Colonic mucosa (tissue), 4 donors: ENCODE measurements at regions of chr18 and their contacts with region 1.

Region 1: DNA sequence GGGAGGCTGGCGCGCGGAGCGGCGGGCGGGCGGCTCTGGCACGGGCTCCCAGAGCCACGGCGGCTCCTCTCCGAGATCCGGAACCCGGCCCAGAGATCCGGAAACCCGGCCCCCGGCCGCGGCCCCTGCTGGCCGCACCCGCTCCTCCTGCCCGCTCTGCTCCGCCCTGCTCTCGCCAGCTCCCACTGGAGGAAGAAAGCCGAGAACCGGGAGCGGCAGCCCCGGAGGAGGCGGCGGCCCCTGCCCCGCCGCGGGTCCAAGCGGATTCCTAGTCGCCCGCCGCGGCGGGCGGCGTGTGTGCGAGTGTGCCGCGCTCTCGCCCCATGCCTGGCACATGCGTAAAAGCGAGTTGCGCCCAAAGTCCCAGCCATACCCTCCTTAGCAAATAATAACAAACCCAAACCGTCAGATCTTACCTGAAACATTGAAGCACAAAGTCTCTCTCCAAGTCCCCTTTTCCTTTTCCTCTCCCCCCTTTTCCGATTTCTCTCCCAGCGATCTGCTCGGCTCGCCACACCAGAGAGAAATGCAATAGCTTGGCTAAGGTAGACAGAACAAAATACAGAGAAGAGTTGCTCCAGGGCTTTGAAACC is 108.7 kb upstream of the KCTD1 start:
- DNase-seq: peak; percentile 76
- H3K4me3 ChIP-seq: peak overlapping the region; percentile 62
- H3K27ac ChIP-seq: peak overlapping the region; percentile 55
- H3K4me1 ChIP-seq: no peaks in the 10 kb centered on the region
- H3K27me3 ChIP-seq: no peaks in the 10 kb centered on the region
- CTCF ChIP-seq: no peak

Region 2: GRCh38 chr18:26307189-26307773 is 349.8 kb before region 1 on chr18:
- intact Hi-C with region 1: loop called (anchors 5 kb)
- DNase-seq: peak; percentile 22
- H3K4me3 ChIP-seq: no peak overlapping the region
- H3K27ac ChIP-seq: no peak overlapping the region
- H3K4me1 ChIP-seq: no peaks in the 10 kb centered on the region
- H3K27me3 ChIP-seq: no peaks in the 10 kb centered on the region
- CTCF ChIP-seq: peak; percentile 52

Region 3: GRCh38 chr18:26386002-26386401 is 271.0 kb before region 1 on chr18:
- intact Hi-C with region 1: loop called (anchors 5 kb)
- DNase-seq: no peak
- H3K4me3 ChIP-seq: no peak overlapping the region
- H3K27ac ChIP-seq: no peak overlapping the region
- H3K4me1 ChIP-seq: no peaks in the 10 kb centered on the region
- H3K27me3 ChIP-seq: no peaks in the 10 kb centered on the region
- CTCF ChIP-seq: no peak

Region 4: GRCh38 chr18:26548429-26549262 is 108.4 kb before region 1 on chr18 and contains the start of gene KCTD1:
- intact Hi-C with region 1: loop called (anchors 2 kb)
- DNase-seq: peak; percentile 90
- H3K4me3 ChIP-seq: peak within 1 kb of the TSS; percentile 68
- H3K27ac ChIP-seq: peak within 1 kb of the TSS; percentile 46
- H3K4me1 ChIP-seq: peaks cover 5% of the 10 kb centered on the region
- H3K27me3 ChIP-seq: peaks cover 20% of the 10 kb centered on the region
- CTCF ChIP-seq: no peak
- total RNA-seq, gene KCTD1: 13.3 to 13.6 TPM

Region 5: DNA sequence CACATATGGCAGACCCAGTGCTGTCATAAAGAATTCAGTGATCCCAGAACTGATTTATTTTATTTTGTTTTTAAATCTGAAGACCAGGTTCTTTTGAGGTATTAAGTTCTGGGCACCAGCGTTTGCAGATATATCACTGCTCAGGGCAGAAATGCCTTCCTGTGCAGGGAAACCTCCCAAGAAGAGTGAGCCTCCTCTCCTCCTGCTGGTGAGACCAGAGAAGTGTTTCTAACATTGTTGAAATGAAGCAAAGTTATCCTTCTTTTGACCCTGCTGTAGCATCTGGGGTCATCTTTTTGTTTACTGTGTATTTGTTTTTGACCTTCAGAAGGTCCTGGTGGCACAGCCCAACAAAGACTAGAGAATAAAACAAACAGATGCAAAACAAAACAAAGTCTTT is 114.5 kb after region 1 on chr18:
- intact Hi-C with region 1: loop called (anchors 10 kb)
- DNase-seq: no peak
- H3K4me3 ChIP-seq: no peak overlapping the region
- H3K27ac ChIP-seq: no peak overlapping the region
- H3K4me1 ChIP-seq: no peaks in the 10 kb centered on the region
- H3K27me3 ChIP-seq: no peaks in the 10 kb centered on the region
- CTCF ChIP-seq: no peak